Transverse colon (tissue), 4 donors: ENCODE measurements at regions of chr14 and their contacts with region 1.

Region 1: DNA sequence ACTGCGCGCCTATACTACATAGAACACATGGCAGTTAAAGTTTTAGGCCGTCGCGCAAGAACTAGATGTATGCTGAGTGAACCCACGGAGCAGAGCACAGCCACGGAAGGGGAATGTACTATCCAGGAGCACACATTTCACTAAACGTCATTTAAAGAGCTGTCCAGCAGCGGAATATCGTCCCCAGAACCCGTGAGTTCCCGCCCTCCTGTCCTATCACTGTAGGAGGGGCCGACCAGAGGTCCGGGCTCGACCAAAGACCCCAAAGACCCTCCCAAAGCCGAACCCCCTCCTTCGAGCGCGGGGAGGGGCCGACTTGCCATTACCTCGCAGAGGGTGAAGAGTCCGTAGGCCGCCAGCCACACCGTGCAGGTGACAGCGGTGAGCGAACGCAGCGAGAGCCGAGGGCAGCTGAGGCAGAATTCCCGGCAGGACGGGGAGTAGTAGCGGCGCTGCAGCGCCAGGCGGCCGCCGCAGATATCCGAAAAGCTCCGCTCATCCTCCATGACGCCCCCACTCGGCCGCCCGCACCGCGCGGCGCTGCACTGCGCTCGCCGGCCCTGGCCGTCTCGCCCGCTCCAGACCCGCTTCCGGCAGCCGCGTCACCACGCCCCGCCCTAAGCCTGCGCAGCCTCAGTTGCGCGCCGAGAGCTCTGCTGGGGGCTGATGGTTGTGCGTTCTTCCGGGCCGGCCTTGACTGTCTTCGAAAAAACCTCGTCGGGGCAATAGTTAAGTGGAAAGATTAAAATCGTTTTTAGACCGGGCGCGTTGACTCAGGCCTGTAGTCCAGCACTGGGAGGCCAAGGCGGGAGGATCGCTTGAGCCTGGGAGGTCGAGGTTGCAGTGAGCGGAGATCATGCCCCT is at the start of gene PIGH:
- DNase-seq: peak; percentile 95
- H3K4me3 ChIP-seq: peak within 1 kb of the TSS; percentile 52 to 94 (median 64)
- H3K27ac ChIP-seq: peak within 1 kb of the TSS; percentile 86 to 97 (median 90)
- H3K4me1 ChIP-seq: peaks cover 3 to 15% (median 9%) of the 10 kb centered on the region in 4 donors
- H3K27me3 ChIP-seq: no peaks in the 10 kb centered on the region
- CTCF ChIP-seq: peak; percentile 51 to 75 (median 63)
- EP300 ChIP-seq: no peak
- POLR2A ChIP-seq: peak; percentile 90
- total RNA-seq, gene PIGH: 18.9 to 41.9 (median 27.7) TPM

Region 2: DNA sequence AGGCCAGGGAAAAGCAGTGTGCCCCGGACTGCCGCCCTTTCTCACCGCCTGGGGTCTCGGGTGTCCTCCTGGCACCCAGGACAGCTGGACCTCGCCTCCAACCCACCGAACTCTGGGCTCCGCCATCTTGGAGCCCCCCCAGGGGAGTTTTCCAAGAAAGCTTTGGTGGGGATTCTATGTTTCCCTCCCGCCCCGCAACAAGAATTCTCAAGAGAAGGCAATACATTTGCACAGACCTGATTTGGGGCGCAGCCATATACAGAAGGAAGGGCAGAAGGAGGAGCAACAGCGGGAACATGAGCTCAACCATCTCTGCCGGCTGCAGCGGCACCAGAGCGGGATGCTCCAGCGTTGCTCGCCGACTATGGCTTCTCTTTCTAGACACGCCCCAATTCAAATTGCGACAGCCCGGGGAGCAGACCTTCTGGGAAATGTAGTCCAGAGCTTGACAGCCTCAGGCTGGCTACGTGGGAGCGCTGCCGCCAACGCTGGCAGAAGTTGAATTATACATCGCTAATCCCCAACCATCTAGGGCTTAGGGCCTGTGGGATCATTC is 95.5 kb after region 1 on chr14 and contains the start of gene RDH11:
- in situ Hi-C with region 1: loop called in 1 of 4 experiments (anchors 25 kb)
- intact Hi-C with region 1: loop called (anchors 10 kb)
- DNase-seq: peak; percentile 90
- H3K4me3 ChIP-seq: peak within 1 kb of the TSS; percentile 69 to 93 (median 82)
- H3K27ac ChIP-seq: peak within 1 kb of the TSS; percentile 87 to 91 (median 89)
- H3K4me1 ChIP-seq: peaks cover 0 to 18% (median 5%) of the 10 kb centered on the region in 4 donors
- H3K27me3 ChIP-seq: no peaks in the 10 kb centered on the region
- CTCF ChIP-seq: no peak
- EP300 ChIP-seq: no peak
- POLR2A ChIP-seq: peak; percentile 78
- total RNA-seq, gene RDH11: 30.8 to 53.9 (median 37.2) TPM